A673 (cell line): ENCODE measurements at regions of chr11 and their contacts with region 1.

Region 1: GRCh38 chr11:36376888-36377758 is 81.0 kb downstream of the PRR5L start:
- DNase-seq: peak; percentile 91
- H3K4me3 ChIP-seq: peak overlapping the region; percentile 57
- H3K27ac ChIP-seq: peak overlapping the region; percentile 47
- H3K4me1 ChIP-seq: peaks cover 72% of the 10 kb centered on the region
- H3K27me3 ChIP-seq: no peaks in the 10 kb centered on the region
- CTCF ChIP-seq: peak; percentile 99

Region 2: DNA sequence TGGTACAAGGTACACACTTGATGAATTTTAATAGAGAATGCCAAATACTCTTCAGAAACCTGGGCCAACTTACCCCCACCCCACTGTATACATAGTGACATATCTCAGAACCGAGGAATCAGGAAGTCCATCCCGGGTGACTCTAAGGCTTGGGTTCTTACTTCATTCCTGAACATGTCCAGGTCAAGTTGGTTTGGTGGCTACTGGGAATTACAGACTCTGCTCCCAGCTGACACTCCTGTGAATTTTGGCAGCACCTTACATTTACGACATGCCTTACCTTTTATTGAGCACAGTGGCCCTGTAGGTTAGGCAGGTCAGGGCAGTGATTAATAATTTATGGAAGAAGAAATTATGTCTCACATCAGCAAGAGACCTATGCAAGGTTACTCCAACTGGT is 503.4 kb before region 1 on chr11:
- CTCF ChIA-PET with region 1: no interaction called
- POLR2A ChIA-PET with region 1: no interaction called
- intact Hi-C with region 1: no loop called
- DNase-seq: no peak
- H3K4me3 ChIP-seq: no peak overlapping the region
- H3K27ac ChIP-seq: no peak overlapping the region
- H3K4me1 ChIP-seq: no peaks in the 10 kb centered on the region
- H3K27me3 ChIP-seq: peaks cover 4% of the 10 kb centered on the region
- CTCF ChIP-seq: no peak

Region 3: DNA sequence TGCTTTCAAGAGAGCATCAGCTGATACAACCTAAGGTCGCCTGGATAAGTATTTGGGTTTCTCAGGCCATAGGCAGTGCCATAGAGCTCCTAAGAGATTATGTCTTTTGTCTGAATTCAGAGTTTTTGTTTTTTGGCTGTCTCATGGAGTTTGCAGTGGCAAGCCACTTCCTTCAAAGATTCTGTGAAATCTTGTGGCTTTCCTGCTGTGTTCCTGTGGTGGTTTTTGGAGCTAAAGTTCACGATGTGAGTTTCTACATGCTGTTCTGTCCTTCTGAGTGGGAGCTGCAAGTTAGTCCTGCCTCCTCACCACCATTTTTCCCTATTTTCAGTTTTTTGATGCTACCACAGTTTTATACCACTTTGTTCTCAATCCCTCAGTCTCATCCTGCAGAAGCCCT is 199.3 kb before region 1 on chr11:
- CTCF ChIA-PET with region 1: no interaction called
- POLR2A ChIA-PET with region 1: no interaction called
- intact Hi-C with region 1: no loop called
- DNase-seq: no peak
- H3K4me3 ChIP-seq: no peak overlapping the region
- H3K27ac ChIP-seq: no peak overlapping the region
- H3K4me1 ChIP-seq: no peaks in the 10 kb centered on the region
- H3K27me3 ChIP-seq: no peaks in the 10 kb centered on the region
- CTCF ChIP-seq: no peak

Region 4: GRCh38 chr11:36289226-36289852 is 87.8 kb before region 1 on chr11 and contains the start of gene COMMD9:
- CTCF ChIA-PET with region 1: interaction called, 3 read pairs
- POLR2A ChIA-PET with region 1: no interaction called
- intact Hi-C with region 1: loop called (anchors 1 kb)
- DNase-seq: peak; percentile 100
- H3K4me3 ChIP-seq: peak within 1 kb of the TSS; percentile 61
- H3K27ac ChIP-seq: peak within 1 kb of the TSS; percentile 39
- H3K4me1 ChIP-seq: peaks cover 17% of the 10 kb centered on the region
- H3K27me3 ChIP-seq: no peaks in the 10 kb centered on the region
- CTCF ChIP-seq: no peak
- total RNA-seq, gene COMMD9: 147 and 154 TPM in 2 replicates

Region 5: DNA sequence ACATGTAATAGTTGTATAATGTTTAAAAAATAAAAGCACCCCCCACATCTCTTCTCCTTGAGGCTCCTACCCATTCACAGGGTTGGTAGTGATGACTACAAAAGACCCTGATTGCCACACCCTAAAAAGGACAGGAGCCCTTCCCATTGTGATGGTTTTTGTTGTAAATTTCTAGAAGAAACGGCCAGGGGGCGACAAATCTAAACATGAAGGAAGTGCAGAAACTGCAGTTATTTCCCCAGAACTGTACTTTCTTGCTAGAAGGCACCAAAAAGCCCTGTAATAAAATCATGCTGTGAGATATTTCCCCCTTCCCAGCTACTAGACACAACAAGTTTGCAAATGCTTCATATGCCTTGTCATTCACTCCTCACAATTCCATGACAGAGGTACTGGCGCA is 70.2 kb before region 1 on chr11:
- CTCF ChIA-PET with region 1: interaction called, 4 read pairs
- POLR2A ChIA-PET with region 1: no interaction called
- intact Hi-C with region 1: loop called (anchors 5 kb)
- DNase-seq: peak; percentile 91
- H3K4me3 ChIP-seq: no peak overlapping the region
- H3K27ac ChIP-seq: no peak overlapping the region
- H3K4me1 ChIP-seq: peaks cover 4% of the 10 kb centered on the region
- H3K27me3 ChIP-seq: no peaks in the 10 kb centered on the region
- CTCF ChIP-seq: peak; percentile 91

Region 6: GRCh38 chr11:36317992-36318391 is 59.1 kb before region 1 on chr11:
- CTCF ChIA-PET with region 1: no interaction called
- POLR2A ChIA-PET with region 1: no interaction called
- intact Hi-C with region 1: no loop called
- DNase-seq: no peak
- H3K4me3 ChIP-seq: no peak overlapping the region
- H3K27ac ChIP-seq: no peak overlapping the region
- H3K4me1 ChIP-seq: no peaks in the 10 kb centered on the region
- H3K27me3 ChIP-seq: peaks cover 44% of the 10 kb centered on the region
- CTCF ChIP-seq: no peak

Region 7: DNA sequence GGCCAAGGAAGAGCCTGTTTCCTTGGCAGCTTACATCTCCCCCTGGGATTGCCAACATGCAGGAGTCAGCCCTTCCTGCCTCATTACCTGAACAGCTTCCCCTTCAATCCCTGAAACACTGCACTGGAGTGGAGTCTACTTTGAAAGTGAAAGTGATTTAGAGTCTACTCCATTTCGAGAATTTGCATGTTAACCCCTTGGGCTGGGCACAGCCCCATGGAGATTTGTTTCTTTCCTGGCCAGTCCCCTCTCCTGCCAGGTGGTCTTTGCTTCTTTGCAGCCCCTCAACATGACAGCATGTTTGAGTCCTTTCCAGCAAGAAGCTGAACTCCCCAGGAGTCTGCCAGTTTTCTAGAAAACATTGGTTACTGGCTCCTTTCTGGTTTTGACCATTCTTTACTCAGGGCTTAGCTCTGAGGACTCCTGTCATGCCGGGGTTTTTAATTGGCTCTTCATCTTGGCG is 73.0 kb after region 1 on chr11:
- CTCF ChIA-PET with region 1: interaction called, 10 read pairs
- POLR2A ChIA-PET with region 1: no interaction called
- intact Hi-C with region 1: no loop called
- DNase-seq: no peak
- H3K4me3 ChIP-seq: no peak overlapping the region
- H3K27ac ChIP-seq: no peak overlapping the region
- H3K4me1 ChIP-seq: peaks cover 13% of the 10 kb centered on the region
- H3K27me3 ChIP-seq: no peaks in the 10 kb centered on the region
- CTCF ChIP-seq: no peak

Region 8: GRCh38 chr11:36492724-36493304 is 115.7 kb after region 1 on chr11:
- CTCF ChIA-PET with region 1: interaction called, 6 read pairs
- POLR2A ChIA-PET with region 1: interaction called, 5 read pairs
- intact Hi-C with region 1: loop called (anchors 5 kb)
- DNase-seq: peak; percentile 86
- H3K4me3 ChIP-seq: no peak overlapping the region
- H3K27ac ChIP-seq: no peak overlapping the region
- H3K4me1 ChIP-seq: peaks cover 11% of the 10 kb centered on the region
- H3K27me3 ChIP-seq: no peaks in the 10 kb centered on the region
- CTCF ChIP-seq: peak; percentile 100

Region 9: GRCh38 chr11:37110382-37110781 is 733.3 kb after region 1 on chr11:
- CTCF ChIA-PET with region 1: no interaction called
- POLR2A ChIA-PET with region 1: no interaction called
- intact Hi-C with region 1: loop called (anchors 10 kb)
- DNase-seq: peak; percentile 94
- H3K4me3 ChIP-seq: no peak overlapping the region
- H3K27ac ChIP-seq: peak overlapping the region; percentile 79
- H3K4me1 ChIP-seq: peaks cover 48% of the 10 kb centered on the region
- H3K27me3 ChIP-seq: no peaks in the 10 kb centered on the region
- CTCF ChIP-seq: no peak